ENCODE measurements at regions of chr9 and their contacts with region 1.

Region 1: GRCh38 chr9:112140936-112141335 is 34.2 kb downstream of the SUSD1 start:
- DNase-seq: no peak
- H3K4me3 Mint-ChIP-seq: no peak overlapping the region
- H3K27ac Mint-ChIP-seq: no peak overlapping the region
- H3K4me1 Mint-ChIP-seq: no peaks in the 10 kb centered on the region
- H3K27me3 Mint-ChIP-seq: no peaks in the 10 kb centered on the region

Region 2: GRCh38 chr9:112180387-112180881 is 39.5 kb after region 1 on chr9:
- intact Hi-C with region 1: loop called (anchors 5 kb)
- DNase-seq: peak; percentile 88
- H3K4me3 Mint-ChIP-seq: peak overlapping the region; percentile 72
- H3K27ac Mint-ChIP-seq: peak overlapping the region; percentile 88
- H3K4me1 Mint-ChIP-seq: peaks cover 54% of the 10 kb centered on the region
- H3K27me3 Mint-ChIP-seq: peaks cover 9% of the 10 kb centered on the region